Activated T-helper 2 cell treated with anti-CD3 and anti-CD28 coated beads, Interferon-gamma antibody, Interleukin-2, Interleukin-4, amounts not matched to agents 10 μg/mL and 5 μg/mL and 100 μg/mL, durations not matched to agents 14 hours and 24 hours and 36 hours (primary cell): ENCODE measurements at regions of chr12 and their contacts with region 1.

Region 1: GRCh38 chr12:40312982-40313576 is 88.3 kb downstream of the LRRK2 start:
- DNase-seq: no peak
- H3K4me3 Mint-ChIP-seq: no peak overlapping the region
- H3K27ac Mint-ChIP-seq: no peak overlapping the region
- H3K4me1 Mint-ChIP-seq: no peaks in the 10 kb centered on the region
- H3K27me3 Mint-ChIP-seq: no peaks in the 10 kb centered on the region

Region 2: GRCh38 chr12:40010899-40011774 is 301.9 kb before region 1 on chr12:
- intact Hi-C with region 1: loop called (anchors 10 kb)
- DNase-seq: peak; percentile 39
- H3K4me3 Mint-ChIP-seq: peak overlapping the region; percentile 51
- H3K27ac Mint-ChIP-seq: no peak overlapping the region
- H3K4me1 Mint-ChIP-seq: peaks cover 16% of the 10 kb centered on the region
- H3K27me3 Mint-ChIP-seq: peaks cover 1% of the 10 kb centered on the region

Region 3: DNA sequence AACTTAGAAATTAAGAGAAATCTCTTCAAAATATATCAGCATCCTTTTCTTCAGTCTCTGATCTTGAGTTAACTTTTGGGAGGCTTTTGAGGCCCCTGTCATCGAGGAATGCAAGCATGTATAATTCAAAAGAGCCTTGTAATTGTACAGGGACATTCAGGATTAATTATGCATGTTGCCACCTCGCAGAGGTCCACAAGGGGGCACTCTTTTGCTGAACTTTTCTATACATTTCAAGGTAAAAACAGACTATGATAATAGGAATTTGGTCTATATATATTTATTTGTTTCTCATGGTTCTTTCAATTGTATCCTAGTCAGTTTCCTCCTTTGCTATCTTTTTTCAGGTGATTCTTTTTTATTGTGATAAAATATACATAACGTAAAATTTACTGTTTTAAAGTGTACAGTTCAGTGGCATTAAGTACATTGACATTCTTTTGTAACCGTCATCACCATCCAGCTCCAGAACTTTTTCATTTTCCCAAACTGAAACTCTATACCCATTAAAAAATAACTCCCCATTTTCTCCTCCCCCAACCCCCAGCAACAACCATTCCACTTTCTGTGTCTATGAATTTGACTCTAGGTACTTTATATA is 160.2 kb before region 1 on chr12:
- intact Hi-C with region 1: loop called (anchors 2 kb)
- DNase-seq: no peak
- H3K4me3 Mint-ChIP-seq: no peak overlapping the region
- H3K27ac Mint-ChIP-seq: no peak overlapping the region
- H3K4me1 Mint-ChIP-seq: no peaks in the 10 kb centered on the region
- H3K27me3 Mint-ChIP-seq: peaks cover 38% of the 10 kb centered on the region

Region 4: GRCh38 chr12:40647651-40648050 is 334.6 kb after region 1 on chr12:
- intact Hi-C with region 1: no loop called
- DNase-seq: no peak
- H3K4me3 Mint-ChIP-seq: no peak overlapping the region
- H3K27ac Mint-ChIP-seq: no peak overlapping the region
- H3K4me1 Mint-ChIP-seq: no peaks in the 10 kb centered on the region
- H3K27me3 Mint-ChIP-seq: no peaks in the 10 kb centered on the region